Activated CD8-positive, alpha-beta memory T cell treated with anti-CD3 and anti-CD28 coated beads, Interleukin-2, amount 10 ng/mL, durations not matched to agents 7 days and 5 days (primary cell): ENCODE measurements at regions of chr4 and their contacts with region 1.

Region 1: DNA sequence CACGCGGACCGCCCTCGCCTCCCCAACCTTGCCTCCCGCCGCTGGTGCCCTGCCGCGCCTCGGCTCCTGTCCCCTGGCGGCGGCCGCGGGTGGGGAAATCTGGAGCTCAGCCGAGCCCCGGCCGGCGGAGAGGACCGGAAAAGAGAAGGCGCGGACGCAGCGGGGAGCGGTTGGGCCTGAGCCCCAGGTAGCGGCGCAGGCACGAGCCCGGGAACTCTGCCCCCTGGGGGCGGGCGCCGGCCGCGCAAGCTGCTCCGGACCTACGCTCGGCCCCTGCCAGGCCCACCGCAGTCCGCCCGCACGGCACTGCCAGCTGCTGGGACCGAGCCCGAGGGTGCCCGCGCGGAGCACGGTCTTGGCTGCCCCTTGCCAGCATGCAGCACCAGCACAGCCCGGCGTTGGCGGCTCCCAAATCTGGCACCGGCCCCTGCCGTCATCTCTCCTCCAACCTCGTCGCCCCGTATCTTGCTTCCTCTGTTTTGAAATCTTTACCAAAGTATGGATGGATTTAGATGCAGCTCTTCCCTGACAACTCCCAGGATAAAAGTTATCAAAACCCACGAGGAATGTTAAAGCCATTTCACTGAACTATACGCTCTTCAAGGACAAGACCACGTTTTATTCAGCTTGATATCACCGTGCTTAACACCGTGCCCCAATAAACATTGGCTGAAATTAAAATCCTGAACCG is at the start of gene PRSS12:
- DNase-seq: peak; percentile 71
- ATAC-seq: peak; percentile 93
- H3K4me3 Mint-ChIP-seq: peak within 1 kb of the TSS; percentile 49
- H3K27ac Mint-ChIP-seq: no peak within 1 kb of the TSS
- H3K4me1 Mint-ChIP-seq: peaks cover 9% of the 10 kb centered on the region
- H3K27me3 Mint-ChIP-seq: peaks cover 75% of the 10 kb centered on the region
- total RNA-seq, gene PRSS12: not detected

Region 2: DNA sequence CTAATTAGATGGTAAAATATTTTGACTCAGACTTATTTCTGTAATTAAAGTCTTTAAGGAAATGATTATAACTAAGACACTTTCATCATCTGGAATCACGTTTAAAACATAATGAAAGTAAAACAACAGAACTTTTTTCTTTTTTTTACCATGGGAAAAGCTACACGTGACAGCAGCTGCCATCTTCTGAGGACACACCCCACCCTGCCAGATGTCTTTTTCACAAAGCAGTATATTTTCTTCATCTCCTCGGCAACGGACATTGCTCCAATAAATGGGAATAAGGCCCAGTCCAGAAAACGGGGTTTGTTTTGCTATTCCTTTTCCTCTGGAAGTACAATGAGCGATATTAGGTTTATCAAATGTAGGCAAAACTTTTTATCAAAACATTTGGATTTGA is 17.7 kb before region 1 on chr4:
- CTCF ChIA-PET with region 1: interaction called, 12 read pairs
- DNase-seq: no peak
- ATAC-seq: no peak
- H3K4me3 Mint-ChIP-seq: no peak overlapping the region
- H3K27ac Mint-ChIP-seq: no peak overlapping the region
- H3K4me1 Mint-ChIP-seq: no peaks in the 10 kb centered on the region
- H3K27me3 Mint-ChIP-seq: peaks cover 5% of the 10 kb centered on the region

Region 3: GRCh38 chr4:118363166-118363565 is 10.2 kb after region 1 on chr4:
- CTCF ChIA-PET with region 1: interaction called, 10 read pairs
- DNase-seq: no peak
- ATAC-seq: no peak
- H3K4me3 Mint-ChIP-seq: no peak overlapping the region
- H3K27ac Mint-ChIP-seq: no peak overlapping the region
- H3K4me1 Mint-ChIP-seq: no peaks in the 10 kb centered on the region
- H3K27me3 Mint-ChIP-seq: peaks cover 32% of the 10 kb centered on the region